B cell (primary cell): ENCODE measurements at regions of chr2 and their contacts with region 1.

Region 1: DNA sequence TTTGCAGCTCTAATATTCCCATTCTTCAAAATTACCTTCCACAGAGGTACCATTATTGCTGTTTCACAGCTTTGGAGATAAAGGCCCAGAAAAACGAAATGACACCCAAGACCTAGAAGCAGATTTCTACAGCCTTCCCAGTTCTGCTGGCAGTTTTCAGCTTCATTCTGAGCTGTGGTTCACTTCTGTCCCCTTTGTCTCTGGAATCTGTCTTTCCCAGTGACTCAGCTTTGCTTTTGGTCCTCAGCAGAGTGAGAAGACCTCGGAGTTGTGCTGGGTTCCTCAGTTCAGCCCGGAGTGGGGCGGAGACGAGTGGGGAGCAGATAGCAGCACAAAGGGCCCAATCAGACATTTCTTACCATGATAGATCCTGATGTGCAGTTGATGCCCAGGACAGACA is 180.7 kb upstream of the CXCR4 start:
- DNase-seq: no peak
- ATAC-seq: no peak
- H3K4me3 ChIP-seq: no peak overlapping the region
- H3K4me3 Mint-ChIP-seq: no peak overlapping the region
- H3K27ac ChIP-seq: no peak overlapping the region
- H3K27ac Mint-ChIP-seq: no peak overlapping the region
- H3K4me1 ChIP-seq: no peaks in the 10 kb centered on the region
- H3K4me1 Mint-ChIP-seq: peaks cover 2% of the 10 kb centered on the region
- H3K27me3 ChIP-seq: no peaks in the 10 kb centered on the region
- H3K27me3 Mint-ChIP-seq: no peaks in the 10 kb centered on the region
- CTCF ChIP-seq: no peak

Region 2: DNA sequence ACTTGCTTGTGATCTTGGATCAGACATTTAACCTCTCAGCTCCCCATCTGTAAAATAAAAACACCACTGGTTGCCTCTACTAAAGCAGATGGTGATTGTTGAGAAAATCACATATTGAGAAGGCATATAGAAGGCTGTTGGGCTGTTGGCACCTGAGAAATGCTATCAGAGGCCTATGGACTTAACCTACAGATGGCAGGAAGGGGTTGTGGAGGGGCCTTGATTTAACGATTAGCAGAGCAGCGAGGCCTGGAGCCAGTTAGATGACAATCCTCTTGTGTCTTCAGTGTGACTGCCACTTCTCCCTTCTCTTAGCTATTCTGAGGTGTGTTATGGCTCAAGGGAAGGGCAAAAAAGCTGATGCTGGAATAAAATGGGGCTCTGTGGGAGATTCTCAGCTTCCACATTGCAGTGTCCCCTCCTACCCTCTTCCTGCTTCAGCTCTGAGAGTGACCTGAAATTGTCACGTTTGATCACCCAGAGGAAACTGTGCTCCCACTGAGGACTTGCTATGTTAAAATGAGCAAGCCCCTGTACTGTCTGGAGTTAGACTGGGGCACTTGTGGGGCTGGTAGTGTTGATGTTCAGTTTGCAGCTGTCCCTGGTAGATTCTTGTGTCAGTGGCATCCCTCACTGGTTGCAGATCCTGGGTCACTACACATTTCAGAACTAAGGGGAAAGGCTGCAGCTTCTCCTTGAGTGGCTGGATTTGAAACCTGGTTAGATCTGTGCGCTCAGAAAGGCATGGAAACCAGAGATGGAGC is 212.2 kb before region 1 on chr2:
- CTCF ChIA-PET with region 1: no interaction called
- POLR2A ChIA-PET with region 1: interaction called, 11 read pairs
- intact Hi-C with region 1: no loop called
- DNase-seq: no peak
- ATAC-seq: no peak
- H3K4me3 ChIP-seq: no peak overlapping the region
- H3K4me3 Mint-ChIP-seq: no peak overlapping the region
- H3K27ac ChIP-seq: no peak overlapping the region
- H3K27ac Mint-ChIP-seq: no peak overlapping the region
- H3K4me1 ChIP-seq: peaks cover 5 to 7% of the 10 kb centered on the region in 2 donors
- H3K4me1 Mint-ChIP-seq: peaks cover 13% of the 10 kb centered on the region
- H3K27me3 ChIP-seq: no peaks in the 10 kb centered on the region
- H3K27me3 Mint-ChIP-seq: no peaks in the 10 kb centered on the region
- CTCF ChIP-seq: no peak

Region 3: GRCh38 chr2:136207030-136207623 is 91.5 kb before region 1 on chr2:
- CTCF ChIA-PET with region 1: no interaction called
- POLR2A ChIA-PET with region 1: no interaction called
- intact Hi-C with region 1: no loop called
- DNase-seq: peak; percentile 94
- ATAC-seq: peak; percentile 65
- H3K4me3 ChIP-seq: peak overlapping the region in 4 of 5 experiments; percentile 1 to 44 (median 26)
- H3K4me3 Mint-ChIP-seq: peak overlapping the region; percentile 84
- H3K27ac ChIP-seq: peak overlapping the region; percentile 98 to 99
- H3K27ac Mint-ChIP-seq: peak overlapping the region; percentile 99
- H3K4me1 ChIP-seq: peaks cover 70 to 74% of the 10 kb centered on the region in 2 donors
- H3K4me1 Mint-ChIP-seq: peaks cover 77% of the 10 kb centered on the region
- H3K27me3 ChIP-seq: no peaks in the 10 kb centered on the region
- H3K27me3 Mint-ChIP-seq: no peaks in the 10 kb centered on the region
- CTCF ChIP-seq: no peak

Region 4: GRCh38 chr2:136767030-136767429 is 468.4 kb after region 1 on chr2:
- CTCF ChIA-PET with region 1: no interaction called
- POLR2A ChIA-PET with region 1: no interaction called
- intact Hi-C with region 1: no loop called
- DNase-seq: no peak
- ATAC-seq: no peak
- H3K4me3 ChIP-seq: no peak overlapping the region
- H3K4me3 Mint-ChIP-seq: no peak overlapping the region
- H3K27ac ChIP-seq: no peak overlapping the region
- H3K27ac Mint-ChIP-seq: no peak overlapping the region
- H3K4me1 ChIP-seq: peaks cover 0 to 5% of the 10 kb centered on the region in 2 donors
- H3K4me1 Mint-ChIP-seq: peaks cover 11% of the 10 kb centered on the region
- H3K27me3 ChIP-seq: peaks cover 0 to 31% (median 14%) of the 10 kb centered on the region in 4 experiments
- H3K27me3 Mint-ChIP-seq: peaks cover 63% of the 10 kb centered on the region
- CTCF ChIP-seq: no peak